ENCODE measurements at regions of chr1 and their contacts with region 1.

Region 1: GRCh38 chr1:16613185-16614147 is at the start of gene NBPF1:
- DNase-seq: peak; percentile 100
- H3K4me3 ChIP-seq: peak within 1 kb of the TSS; percentile 48 to 66 (median 53)
- H3K27ac ChIP-seq: no peak within 1 kb of the TSS
- H3K4me1 ChIP-seq: peaks cover 12% of the 10 kb centered on the region
- H3K27me3 ChIP-seq: no peaks in the 10 kb centered on the region
- CTCF ChIP-seq: peak in 1 of 2 donors; percentile 1
- POLR2A ChIP-seq: peak; percentile 99
- total RNA-seq, gene NBPF1: 33.5 and 58.4 TPM in 2 replicates

Region 2: GRCh38 chr1:16625497-16626408 is 12.3 kb after region 1 on chr1:
- CTCF ChIA-PET with region 1: interaction called, 38 read pairs
- POLR2A ChIA-PET with region 1: no interaction called
- dilution Hi-C with region 1: no loop called
- intact Hi-C with region 1: loop called (anchors 1 kb)
- DNase-seq: no peak
- H3K4me3 ChIP-seq: no peak overlapping the region
- H3K27ac ChIP-seq: no peak overlapping the region
- H3K4me1 ChIP-seq: no peaks in the 10 kb centered on the region
- H3K27me3 ChIP-seq: no peaks in the 10 kb centered on the region
- CTCF ChIP-seq: no peak
- POLR2A ChIP-seq: no peak

Region 3: DNA sequence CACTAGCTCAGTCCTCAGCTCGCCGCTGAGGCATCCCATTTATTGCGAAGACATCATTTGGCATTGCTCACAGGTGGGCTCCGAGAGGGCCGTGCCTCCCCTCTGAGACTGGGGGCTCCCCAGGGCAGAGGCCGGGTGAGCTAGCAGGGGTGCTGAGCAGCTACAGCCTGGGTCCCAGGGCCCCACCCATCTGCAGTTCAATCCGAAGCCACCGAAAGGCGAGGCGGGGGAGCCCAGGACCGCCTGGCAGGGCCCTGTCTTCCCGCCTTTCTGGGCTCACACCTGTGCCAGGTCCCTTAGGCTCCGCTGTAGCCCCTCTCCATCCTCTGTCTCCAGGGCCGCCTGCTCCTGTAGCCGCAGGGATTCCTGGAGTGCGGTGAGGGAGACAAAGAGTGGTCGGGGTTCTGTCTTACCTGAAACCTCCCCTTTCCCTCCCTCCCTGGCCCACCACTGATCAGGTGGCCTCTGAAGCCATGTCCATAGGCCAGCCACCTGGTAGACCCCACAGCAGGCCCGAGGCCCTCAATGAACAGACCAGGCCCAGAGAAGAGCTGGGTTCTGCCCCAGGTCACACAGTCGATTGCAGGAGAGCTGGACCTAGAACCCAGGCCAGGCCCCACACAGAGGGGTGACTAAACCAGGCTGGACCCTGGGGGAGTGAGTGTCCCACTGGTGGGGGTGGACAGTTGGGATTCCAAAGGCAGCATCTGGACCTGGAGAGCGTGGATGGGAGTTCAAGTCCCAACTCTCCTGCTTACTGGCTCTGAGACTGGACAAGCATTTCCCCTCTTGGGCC is 18.0 kb after region 1 on chr1:
- CTCF ChIA-PET with region 1: interaction called, 4 read pairs
- POLR2A ChIA-PET with region 1: interaction called, 5 read pairs
- dilution Hi-C with region 1: no loop called
- intact Hi-C with region 1: loop called (anchors 2 kb)
- DNase-seq: no peak
- H3K4me3 ChIP-seq: no peak overlapping the region
- H3K27ac ChIP-seq: no peak overlapping the region
- H3K4me1 ChIP-seq: no peaks in the 10 kb centered on the region
- H3K27me3 ChIP-seq: no peaks in the 10 kb centered on the region
- CTCF ChIP-seq: no peak
- POLR2A ChIP-seq: no peak

Region 4: GRCh38 chr1:16677552-16678431 is 64.3 kb after region 1 on chr1:
- CTCF ChIA-PET with region 1: no interaction called
- POLR2A ChIA-PET with region 1: no interaction called
- dilution Hi-C with region 1: no loop called
- intact Hi-C with region 1: no loop called
- DNase-seq: peak; percentile 47
- H3K4me3 ChIP-seq: no peak overlapping the region
- H3K27ac ChIP-seq: no peak overlapping the region
- H3K4me1 ChIP-seq: no peaks in the 10 kb centered on the region
- H3K27me3 ChIP-seq: peaks cover 10 to 13% of the 10 kb centered on the region in 2 experiments
- CTCF ChIP-seq: no peak
- POLR2A ChIP-seq: no peak

Region 5: GRCh38 chr1:17053685-17054410 is 440.4 kb after region 1 on chr1 and contains the start of gene SDHB:
- CTCF ChIA-PET with region 1: no interaction called
- POLR2A ChIA-PET with region 1: no interaction called
- dilution Hi-C with region 1: no loop called
- intact Hi-C with region 1: loop called (anchors 2 kb)
- DNase-seq: peak; percentile 100
- H3K4me3 ChIP-seq: peak within 1 kb of the TSS; percentile 67 to 85 (median 83)
- H3K27ac ChIP-seq: peak within 1 kb of the TSS; percentile 62
- H3K4me1 ChIP-seq: peaks cover 8% of the 10 kb centered on the region
- H3K27me3 ChIP-seq: no peaks in the 10 kb centered on the region
- CTCF ChIP-seq: no peak
- POLR2A ChIP-seq: peak; percentile 84
- total RNA-seq, gene SDHB: 90.3 and 96.2 TPM in 2 replicates